A549 (cell line): ENCODE measurements at regions of chr19 and their contacts with region 1.

Region 1: GRCh38 chr19:50933640-50934039 is 19.2 kb downstream of the KLK5 start:
- DNase-seq: peak in 1 of 2 experiments; percentile 84
- ATAC-seq: peak in 1 of 2 experiments; percentile 61; a peak in 3 of 6 replicates
- H3K4me3 ChIP-seq: no peak overlapping the region
- H3K27ac ChIP-seq: peak overlapping the region; percentile 64 to 82
- H3K4me1 ChIP-seq: peaks cover 12% of the 10 kb centered on the region
- CTCF ChIP-seq: no peak
- EP300 ChIP-seq: no peak
- POLR2A ChIP-seq: no peak
- RAD21 ChIP-seq: no peak

Region 2: GRCh38 chr19:50679177-50680125 is 254.2 kb before region 1 on chr19:
- CTCF ChIA-PET with region 1: no interaction called
- POLR2A ChIA-PET with region 1: no interaction called
- DNase-seq: peak; percentile 93 to 98
- ATAC-seq: peak; percentile 89 to 97
- H3K4me3 ChIP-seq: no peak overlapping the region
- H3K27ac ChIP-seq: no peak overlapping the region
- H3K4me1 ChIP-seq: no peaks in the 10 kb centered on the region
- CTCF ChIP-seq: no peak
- EP300 ChIP-seq: no peak
- POLR2A ChIP-seq: no peak
- RAD21 ChIP-seq: no peak

Region 3: DNA sequence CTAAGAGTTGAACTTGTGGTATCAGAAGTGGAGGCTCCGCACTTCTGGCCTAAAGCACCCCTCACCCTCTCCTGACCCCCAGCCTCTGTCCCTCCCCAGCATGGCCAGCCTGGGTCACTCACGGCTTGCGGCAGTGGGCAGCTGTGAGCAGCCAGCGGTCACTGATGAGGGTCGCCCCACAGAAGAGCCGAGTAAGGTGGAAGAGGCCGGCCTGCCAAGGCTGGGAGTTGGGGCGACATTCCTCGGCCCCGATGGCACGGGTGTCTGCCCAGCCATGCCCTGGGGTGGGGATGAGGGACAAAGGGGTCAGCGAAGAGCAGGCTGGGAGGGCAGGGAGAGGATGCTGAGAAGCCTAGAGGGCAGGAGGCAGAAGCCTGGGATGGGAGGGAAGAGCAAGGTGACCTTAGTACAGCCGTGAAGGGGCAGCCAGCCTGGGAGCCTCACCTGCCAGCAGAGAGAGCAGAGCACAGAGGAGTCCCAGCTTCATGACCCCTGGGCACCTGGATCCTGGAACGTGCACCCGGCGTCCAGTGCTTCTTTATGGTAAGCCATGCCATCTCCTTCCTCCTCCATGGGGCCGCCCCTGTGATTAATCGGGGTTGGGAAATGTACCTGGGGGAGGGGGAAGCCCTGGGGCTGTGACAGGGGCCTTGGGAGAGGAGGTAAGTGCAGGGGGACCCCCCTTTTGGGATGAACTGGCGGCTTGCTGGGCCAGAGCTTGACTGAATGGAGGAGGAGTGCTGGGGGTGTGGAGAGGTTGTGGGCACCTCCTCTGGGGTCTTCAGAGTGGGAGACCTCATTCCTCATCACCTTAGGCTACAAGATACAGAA is 75.6 kb after region 1 on chr19:
- CTCF ChIA-PET with region 1: interaction called, 14 read pairs
- POLR2A ChIA-PET with region 1: no interaction called
- DNase-seq: no peak
- ATAC-seq: 0 out of 6 replicates have a peak, but pooled peaks of 1 of the 2 experiments have one; percentile 6
- H3K4me3 ChIP-seq: no peak overlapping the region
- H3K27ac ChIP-seq: no peak overlapping the region
- H3K4me1 ChIP-seq: no peaks in the 10 kb centered on the region
- CTCF ChIP-seq: no peak
- EP300 ChIP-seq: no peak
- POLR2A ChIP-seq: no peak
- RAD21 ChIP-seq: no peak